Sciatic nerve (tissue), 2 donors: ENCODE measurements at regions of chr3 and their contacts with region 1.

Region 1: DNA sequence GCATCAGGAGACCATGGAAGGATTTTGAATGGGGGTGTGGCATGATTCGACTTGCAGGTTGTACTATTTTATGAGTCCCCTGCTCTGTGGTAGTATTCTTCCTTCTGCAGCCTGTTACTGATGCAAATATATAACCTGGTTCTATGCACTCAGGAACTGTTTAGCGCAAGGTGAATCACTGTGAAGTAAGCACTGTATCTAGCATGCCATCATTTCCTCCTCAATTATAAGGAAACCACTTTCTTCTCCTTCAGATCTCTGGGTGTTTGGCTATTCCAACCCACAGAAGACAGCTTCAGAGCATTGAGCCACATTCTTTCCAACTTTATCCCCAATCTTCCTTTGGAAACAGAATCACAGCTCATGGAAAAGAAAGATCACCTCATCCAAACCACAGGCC is 176.7 kb downstream of the DIPK2A start:
- DNase-seq: no peak
- ATAC-seq: no peak

Region 2: DNA sequence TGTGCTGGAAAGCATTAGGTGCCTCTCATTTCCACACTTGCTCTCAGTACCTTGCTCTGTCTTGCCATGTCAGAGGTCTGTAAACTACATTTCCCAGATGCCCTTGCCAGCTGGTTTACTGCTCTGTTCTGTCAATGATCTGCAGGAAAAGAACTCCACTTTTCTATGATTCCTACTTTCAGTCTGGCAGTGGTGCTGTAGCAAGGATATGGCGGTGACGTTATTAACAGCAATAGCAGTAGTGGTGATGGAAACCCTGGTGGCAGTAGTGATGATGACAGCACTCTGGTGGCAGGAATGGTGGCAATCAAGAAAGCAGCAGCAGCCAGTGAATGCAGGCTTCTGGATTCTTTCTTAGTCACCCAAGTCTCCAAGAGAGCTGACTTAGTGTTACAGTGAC is 488.5 kb after region 1 on chr3:
- intact Hi-C with region 1: loop called (anchors 5 kb)
- DNase-seq: no peak
- ATAC-seq: no peak

Region 3: DNA sequence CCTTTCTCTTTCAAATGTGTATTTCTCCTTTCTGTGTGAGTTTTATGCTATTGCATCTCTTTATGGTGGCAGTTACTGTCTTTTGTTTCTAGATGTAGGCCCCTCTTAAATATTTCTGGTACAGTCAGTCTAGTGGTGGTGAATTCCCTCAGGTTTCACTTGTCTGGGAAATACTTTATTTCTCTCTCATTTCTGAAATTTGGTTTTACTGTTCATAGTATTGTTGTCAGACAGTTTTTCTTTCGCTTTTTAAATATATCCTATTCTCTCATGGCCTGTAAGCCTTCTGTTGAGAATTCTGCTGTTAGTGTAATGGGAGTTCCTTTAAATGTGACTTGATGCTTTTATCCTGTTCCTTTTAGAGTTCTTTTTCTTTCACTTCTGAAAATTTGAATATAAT is 1138.6 kb after region 1 on chr3:
- intact Hi-C with region 1: no loop called
- DNase-seq: no peak
- ATAC-seq: no peak